ENCODE measurements at regions of chr9 and their contacts with region 1.

Region 1: GRCh38 chr9:121322037-121322775 is 47.8 kb downstream of the STOM start:
- DNase-seq: peak in 2 of 9 experiments; percentile 13 to 18
- ATAC-seq: no peak
- H3K4me3 ChIP-seq: no peak overlapping the region
- H3K4me3 Mint-ChIP-seq: no peak overlapping the region
- H3K27ac ChIP-seq: no peak overlapping the region
- H3K27ac Mint-ChIP-seq: no peak overlapping the region
- H3K4me1 ChIP-seq: peaks cover 7% of the 10 kb centered on the region
- H3K4me1 Mint-ChIP-seq: peaks cover 21% of the 10 kb centered on the region
- H3K27me3 ChIP-seq: no peaks in the 10 kb centered on the region
- H3K27me3 Mint-ChIP-seq: no peaks in the 10 kb centered on the region
- CTCF ChIP-seq: no peak

Region 2: GRCh38 chr9:119998614-119999013 is 1323.6 kb before region 1 on chr9:
- CTCF ChIA-PET with region 1: no interaction called
- POLR2A ChIA-PET with region 1: no interaction called
- intact Hi-C with region 1: no loop called
- DNase-seq: no peak
- ATAC-seq: no peak
- H3K4me3 ChIP-seq: no peak overlapping the region
- H3K4me3 Mint-ChIP-seq: no peak overlapping the region
- H3K27ac ChIP-seq: no peak overlapping the region
- H3K27ac Mint-ChIP-seq: no peak overlapping the region
- H3K4me1 ChIP-seq: no peaks in the 10 kb centered on the region
- H3K4me1 Mint-ChIP-seq: no peaks in the 10 kb centered on the region
- H3K27me3 ChIP-seq: no peaks in the 10 kb centered on the region
- H3K27me3 Mint-ChIP-seq: no peaks in the 10 kb centered on the region
- CTCF ChIP-seq: no peak

Region 3: GRCh38 chr9:121278535-121279261 is 43.5 kb before region 1 on chr9:
- CTCF ChIA-PET with region 1: interaction called, 12 read pairs
- POLR2A ChIA-PET with region 1: no interaction called
- intact Hi-C with region 1: no loop called
- DNase-seq: peak in 4 of 9 experiments; percentile 14 to 58 (median 32)
- ATAC-seq: peak; percentile 77
- H3K4me3 ChIP-seq: no peak overlapping the region
- H3K4me3 Mint-ChIP-seq: no peak overlapping the region
- H3K27ac ChIP-seq: no peak overlapping the region
- H3K27ac Mint-ChIP-seq: no peak overlapping the region
- H3K4me1 ChIP-seq: no peaks in the 10 kb centered on the region
- H3K4me1 Mint-ChIP-seq: peaks cover 3% of the 10 kb centered on the region
- H3K27me3 ChIP-seq: no peaks in the 10 kb centered on the region
- H3K27me3 Mint-ChIP-seq: no peaks in the 10 kb centered on the region
- CTCF ChIP-seq: peak; percentile 57

Region 4: DNA sequence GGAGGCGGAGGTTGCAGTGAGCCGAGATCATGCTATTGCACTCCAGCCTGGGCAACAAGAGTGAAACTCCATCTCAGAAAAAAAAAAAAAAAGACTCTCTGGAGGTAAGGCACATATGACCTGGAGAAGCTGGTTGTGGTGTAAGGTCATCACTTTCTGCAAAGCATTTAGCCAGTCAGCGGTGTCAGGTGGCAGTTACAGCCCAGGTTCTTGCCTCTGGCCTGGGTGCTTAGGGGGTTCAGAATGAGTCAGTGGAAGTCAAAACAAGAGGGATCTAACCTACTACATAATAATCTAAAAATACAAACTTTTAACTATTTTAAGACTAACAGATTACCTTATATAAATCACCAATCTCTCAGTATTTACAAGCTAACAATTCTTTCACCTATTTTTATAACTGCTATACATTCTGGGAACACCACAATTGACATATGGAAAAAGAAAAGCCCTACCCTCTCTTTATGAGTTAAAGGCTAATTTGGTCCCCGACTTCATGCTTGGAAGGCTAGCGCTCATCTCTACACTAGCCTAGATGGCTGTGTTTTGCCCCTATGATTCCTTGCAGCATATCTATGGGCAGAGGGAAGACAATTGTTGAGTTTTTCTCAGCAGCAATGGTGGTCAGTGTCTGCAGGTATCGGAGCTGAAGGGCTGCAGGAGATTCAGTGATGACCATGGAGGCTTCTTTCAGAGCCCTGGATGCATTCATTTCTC is 18.6 kb after region 1 on chr9:
- CTCF ChIA-PET with region 1: interaction called, 39 read pairs
- POLR2A ChIA-PET with region 1: interaction called, 3 read pairs
- intact Hi-C with region 1: no loop called
- DNase-seq: no peak
- ATAC-seq: no peak
- H3K4me3 ChIP-seq: no peak overlapping the region
- H3K4me3 Mint-ChIP-seq: no peak overlapping the region
- H3K27ac ChIP-seq: no peak overlapping the region
- H3K27ac Mint-ChIP-seq: no peak overlapping the region
- H3K4me1 ChIP-seq: no peaks in the 10 kb centered on the region
- H3K4me1 Mint-ChIP-seq: peaks cover 7% of the 10 kb centered on the region
- H3K27me3 ChIP-seq: no peaks in the 10 kb centered on the region
- H3K27me3 Mint-ChIP-seq: no peaks in the 10 kb centered on the region
- CTCF ChIP-seq: no peak

Region 5: DNA sequence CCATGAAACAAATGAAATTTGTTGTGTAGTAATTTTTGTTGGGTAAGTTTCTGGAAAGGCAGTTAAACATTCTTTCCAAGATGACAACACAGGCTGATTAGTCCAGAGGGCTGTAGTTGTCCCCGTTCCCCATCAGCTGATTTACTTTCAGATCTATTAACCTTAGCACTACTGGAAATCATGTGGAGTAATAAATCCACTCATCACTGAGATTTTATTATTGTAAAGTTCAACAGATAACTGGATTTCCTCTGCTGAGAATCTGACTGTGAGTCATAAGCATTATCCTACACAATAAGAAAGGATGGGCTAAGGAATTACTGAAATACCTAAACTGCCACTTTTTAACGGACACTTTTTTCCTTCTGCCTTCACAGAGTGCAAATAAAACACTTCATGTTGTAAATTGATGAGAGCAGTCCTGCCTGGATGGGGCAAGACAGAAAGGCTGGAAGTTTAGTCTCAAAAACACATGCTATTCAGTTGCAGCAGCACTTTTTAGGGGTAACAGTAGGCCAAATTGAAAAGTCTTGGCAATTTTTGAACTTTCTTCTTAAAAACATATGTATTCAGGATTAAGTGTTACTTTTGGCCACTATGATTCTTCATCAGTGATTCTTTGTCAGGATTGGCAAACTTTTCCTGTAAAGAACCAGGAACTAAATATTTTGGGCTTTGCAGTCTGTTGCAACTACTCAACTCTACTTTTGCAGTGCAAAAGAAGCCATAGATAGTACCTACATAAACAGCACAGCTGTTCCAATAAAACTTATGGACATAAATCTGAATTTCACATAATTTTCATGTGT is 40.8 kb after region 1 on chr9:
- CTCF ChIA-PET with region 1: interaction called, 28 read pairs
- POLR2A ChIA-PET with region 1: no interaction called
- intact Hi-C with region 1: no loop called
- DNase-seq: no peak
- ATAC-seq: no peak
- H3K4me3 ChIP-seq: no peak overlapping the region
- H3K4me3 Mint-ChIP-seq: no peak overlapping the region
- H3K27ac ChIP-seq: peak overlapping the region in 1 of 2 experiments; percentile 33
- H3K27ac Mint-ChIP-seq: no peak overlapping the region
- H3K4me1 ChIP-seq: peaks cover 27% of the 10 kb centered on the region
- H3K4me1 Mint-ChIP-seq: peaks cover 78% of the 10 kb centered on the region
- H3K27me3 ChIP-seq: no peaks in the 10 kb centered on the region
- H3K27me3 Mint-ChIP-seq: no peaks in the 10 kb centered on the region
- CTCF ChIP-seq: no peak

Region 6: GRCh38 chr9:121376214-121376830 is 54.1 kb after region 1 on chr9:
- CTCF ChIA-PET with region 1: interaction called, 183 read pairs
- POLR2A ChIA-PET with region 1: no interaction called
- intact Hi-C with region 1: loop called (anchors 1 kb)
- DNase-seq: peak in 2 of 9 experiments; percentile 43 to 60
- ATAC-seq: no peak
- H3K4me3 ChIP-seq: no peak overlapping the region
- H3K4me3 Mint-ChIP-seq: no peak overlapping the region
- H3K27ac ChIP-seq: no peak overlapping the region
- H3K27ac Mint-ChIP-seq: no peak overlapping the region
- H3K4me1 ChIP-seq: no peaks in the 10 kb centered on the region
- H3K4me1 Mint-ChIP-seq: peaks cover 22% of the 10 kb centered on the region
- H3K27me3 ChIP-seq: no peaks in the 10 kb centered on the region
- H3K27me3 Mint-ChIP-seq: no peaks in the 10 kb centered on the region
- CTCF ChIP-seq: peak; percentile 61

Region 7: GRCh38 chr9:121399883-121400607 is 77.8 kb after region 1 on chr9:
- CTCF ChIA-PET with region 1: interaction called, 382 read pairs
- POLR2A ChIA-PET with region 1: interaction called, 10 read pairs
- intact Hi-C with region 1: loop called (anchors 1 kb)
- DNase-seq: peak in 3 of 9 experiments; percentile 8 to 80 (median 72)
- ATAC-seq: peak; percentile 42
- H3K4me3 ChIP-seq: no peak overlapping the region
- H3K4me3 Mint-ChIP-seq: no peak overlapping the region
- H3K27ac ChIP-seq: no peak overlapping the region
- H3K27ac Mint-ChIP-seq: no peak overlapping the region
- H3K4me1 ChIP-seq: no peaks in the 10 kb centered on the region
- H3K4me1 Mint-ChIP-seq: no peaks in the 10 kb centered on the region
- H3K27me3 ChIP-seq: no peaks in the 10 kb centered on the region
- H3K27me3 Mint-ChIP-seq: peaks cover 3% of the 10 kb centered on the region
- CTCF ChIP-seq: peak; percentile 92

Measured in CD8-positive, alpha-beta T cell (primary cell).